Sigmoid colon (tissue), 7 donors: ENCODE measurements at regions of chr10 and their contacts with region 1.

Region 1: GRCh38 chr10:71285180-71285545 is 33.9 kb upstream of the SLC29A3 start:
- DNase-seq: no peak
- H3K4me3 ChIP-seq: no peak overlapping the region
- H3K27ac ChIP-seq: no peak overlapping the region
- H3K4me1 ChIP-seq: no peaks in the 10 kb centered on the region
- H3K27me3 ChIP-seq: no peaks in the 10 kb centered on the region
- CTCF ChIP-seq: peak; percentile 52 to 79 (median 68)
- EP300 ChIP-seq: no peak
- POLR2A ChIP-seq: no peak

Region 2: DNA sequence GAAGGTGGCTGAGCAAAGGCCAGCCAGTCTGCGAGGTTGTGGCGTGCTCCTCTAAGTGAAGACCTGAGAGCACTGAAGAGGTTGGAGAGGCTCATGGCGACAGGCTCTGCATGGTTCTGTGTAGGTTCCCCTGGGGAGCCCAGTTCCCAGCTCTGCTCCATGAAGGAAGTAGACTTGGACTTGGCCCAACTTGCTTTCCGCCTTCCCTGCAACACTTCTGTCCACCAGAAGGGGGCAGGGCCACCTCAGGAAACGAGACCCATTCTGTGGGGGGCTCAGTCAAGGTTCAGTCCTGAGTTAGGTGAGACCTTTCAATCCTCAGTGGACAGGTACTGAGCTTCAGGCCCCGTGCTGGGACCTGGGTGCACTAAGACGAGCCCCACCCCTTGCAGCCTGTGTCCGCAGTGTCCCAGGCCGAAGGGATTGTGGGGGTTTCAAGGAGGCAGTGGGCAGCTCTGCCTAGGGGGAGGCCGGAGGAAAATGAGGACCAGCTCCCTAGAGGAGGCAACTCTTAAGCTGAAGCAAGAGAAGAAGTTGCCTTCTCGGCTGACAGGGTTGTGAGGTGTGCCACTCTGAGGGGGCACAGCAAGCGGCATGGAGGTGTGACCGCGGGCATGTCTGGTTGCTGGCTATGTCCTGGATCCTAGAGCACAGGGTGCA is 381.8 kb before region 1 on chr10:
- intact Hi-C with region 1: loop called (anchors 5 kb)
- DNase-seq: peak; percentile 82
- H3K4me3 ChIP-seq: no peak overlapping the region
- H3K27ac ChIP-seq: no peak overlapping the region
- H3K4me1 ChIP-seq: peaks cover 0 to 21% (median 17%) of the 10 kb centered on the region in 4 donors
- H3K27me3 ChIP-seq: peaks cover 0 to 2% (median 0%) of the 10 kb centered on the region in 3 donors
- CTCF ChIP-seq: peak; percentile 68 to 86 (median 74)
- EP300 ChIP-seq: no peak
- POLR2A ChIP-seq: no peak

Region 3: GRCh38 chr10:71187600-71187999 is 97.6 kb before region 1 on chr10:
- intact Hi-C with region 1: no loop called
- DNase-seq: no peak
- H3K4me3 ChIP-seq: no peak overlapping the region
- H3K27ac ChIP-seq: no peak overlapping the region
- H3K4me1 ChIP-seq: peaks cover 0 to 10% (median 5%) of the 10 kb centered on the region in 4 donors
- H3K27me3 ChIP-seq: no peaks in the 10 kb centered on the region
- CTCF ChIP-seq: no peak
- EP300 ChIP-seq: no peak
- POLR2A ChIP-seq: no peak

Region 4: DNA sequence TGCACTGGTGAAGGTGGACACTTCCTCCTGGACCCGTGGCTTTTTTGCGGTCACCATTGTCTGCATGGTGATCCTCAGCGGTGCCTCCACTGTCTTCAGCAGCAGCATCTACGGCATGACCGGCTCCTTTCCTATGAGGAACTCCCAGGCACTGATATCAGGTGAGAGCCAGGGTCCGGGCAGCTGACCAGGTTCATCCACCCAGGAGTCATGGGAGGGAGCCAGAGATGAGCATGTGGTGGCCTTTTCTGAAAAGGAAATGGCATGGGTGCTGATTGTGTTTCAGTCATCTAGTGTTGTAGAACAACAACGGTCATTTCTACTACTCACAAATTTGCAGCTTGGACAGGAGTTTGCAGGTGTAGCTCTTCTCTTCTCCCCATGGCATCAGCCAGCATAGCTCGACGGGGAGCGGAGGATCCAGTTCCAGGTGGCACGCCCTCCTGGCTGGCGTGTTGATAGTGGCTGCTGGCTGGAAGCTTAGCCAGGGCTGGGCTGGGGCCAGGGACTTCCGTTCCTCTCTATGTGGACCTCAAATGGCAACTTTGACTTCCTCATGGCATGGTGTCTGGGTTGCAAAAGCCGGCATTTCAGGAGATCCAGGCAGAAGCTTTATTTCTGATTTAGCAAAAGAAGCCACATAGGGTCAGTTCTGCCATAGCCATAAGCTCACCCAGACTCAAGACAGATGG is 66.6 kb after region 1 on chr10:
- intact Hi-C with region 1: no loop called
- DNase-seq: no peak
- H3K4me3 ChIP-seq: no peak overlapping the region
- H3K27ac ChIP-seq: no peak overlapping the region
- H3K4me1 ChIP-seq: no peaks in the 10 kb centered on the region
- H3K27me3 ChIP-seq: no peaks in the 10 kb centered on the region
- CTCF ChIP-seq: no peak
- EP300 ChIP-seq: no peak
- POLR2A ChIP-seq: no peak